A549 (cell line): ENCODE measurements at regions of chr14 and their contacts with region 1.

Region 1: DNA sequence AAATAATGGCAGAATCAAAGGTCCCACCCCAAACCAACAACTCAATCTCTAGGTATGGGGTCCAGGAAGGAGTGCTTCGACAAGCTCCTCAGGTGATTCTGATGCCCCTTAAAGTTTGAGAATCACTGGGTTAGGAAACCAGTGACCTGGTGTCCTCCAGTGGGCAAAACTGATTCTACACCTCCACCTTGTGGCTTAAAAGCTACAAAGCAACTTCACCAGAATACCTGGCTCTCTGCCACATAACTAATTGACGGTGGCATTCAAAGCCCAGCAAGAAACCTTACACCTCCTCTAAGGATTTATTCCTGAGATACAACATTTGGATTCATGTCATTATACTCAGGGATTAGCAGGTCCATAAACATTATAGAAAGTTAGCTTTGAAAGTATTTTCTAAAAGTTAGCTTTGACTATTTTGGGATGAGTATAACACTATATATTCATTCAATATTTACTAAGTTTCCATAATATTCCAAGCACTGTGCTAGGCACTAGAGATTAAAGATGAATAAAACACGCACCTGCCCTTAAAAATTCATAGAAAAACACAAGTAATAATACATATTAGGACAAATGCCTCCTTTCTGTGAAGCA is 45.4 kb downstream of the DCAF5 start:
- DNase-seq: peak; percentile 55 to 71
- ATAC-seq: peak; percentile 85 to 91; a peak in 5 of 6 replicates
- H3K4me3 ChIP-seq: no peak overlapping the region
- H3K27ac ChIP-seq: peak overlapping the region in 1 of 2 experiments; percentile 5; a peak in 1 of 6 replicates
- H3K4me1 ChIP-seq: no peaks in the 10 kb centered on the region; the same call in 2 of the 3 replicates
- CTCF ChIP-seq: peak; percentile 86
- EP300 ChIP-seq: no peak
- POLR2A ChIP-seq: no peak
- RAD21 ChIP-seq: peak; percentile 92 to 93

Region 2: GRCh38 chr14:68843471-68844209 is 263.9 kb before region 1 on chr14:
- CTCF ChIA-PET with region 1: interaction called, 17 read pairs
- POLR2A ChIA-PET with region 1: no interaction called
- DNase-seq: peak; percentile 69 to 76
- ATAC-seq: peak; percentile 91 to 96
- H3K4me3 ChIP-seq: no peak overlapping the region; the same call in 2 of the 3 replicates
- H3K27ac ChIP-seq: peak overlapping the region; percentile 35 to 83
- H3K4me1 ChIP-seq: 0 out of 3 replicates have a peak, but pooled peaks cover 4% of the 10 kb centered on the region
- CTCF ChIP-seq: peak; percentile 96
- EP300 ChIP-seq: no peak
- POLR2A ChIP-seq: no peak
- RAD21 ChIP-seq: peak; percentile 83 to 87

Region 3: GRCh38 chr14:68884031-68885030 is 223.2 kb before region 1 on chr14:
- CTCF ChIA-PET with region 1: interaction called, 23 read pairs
- POLR2A ChIA-PET with region 1: interaction called, 3 read pairs
- DNase-seq: peak; percentile 79 to 87
- ATAC-seq: peak; percentile 87 to 88
- H3K4me3 ChIP-seq: no peak overlapping the region; the same call in 2 of the 3 replicates
- H3K27ac ChIP-seq: peak overlapping the region; percentile 87 to 90
- H3K4me1 ChIP-seq: peaks cover 34% of the 10 kb centered on the region
- CTCF ChIP-seq: no peak
- EP300 ChIP-seq: peak in 1 of 2 experiments; percentile 32; a peak in 1 of 5 replicates
- POLR2A ChIP-seq: no peak
- RAD21 ChIP-seq: peak; percentile 1 to 11; a peak in 1 of 5 replicates

Region 4: DNA sequence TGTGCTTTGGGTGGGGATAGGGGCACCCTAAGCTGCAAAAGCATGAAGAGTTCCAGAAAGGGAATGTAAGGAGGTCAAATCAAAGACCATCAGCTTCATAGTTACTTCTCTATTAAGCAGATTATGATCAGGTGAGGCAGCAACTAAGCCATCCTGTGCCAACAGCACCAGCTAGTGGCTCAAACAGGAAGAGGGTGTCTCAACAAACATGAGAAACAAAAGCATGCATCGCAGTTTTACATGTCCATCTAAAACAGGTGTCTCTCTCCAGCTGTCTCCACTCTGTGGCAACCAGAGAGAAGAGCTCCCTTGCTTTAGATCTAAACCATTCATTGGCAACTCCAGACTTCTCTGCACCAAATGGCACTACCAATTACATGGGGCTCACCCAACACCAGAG is 181.3 kb before region 1 on chr14:
- CTCF ChIA-PET with region 1: interaction called, 33 read pairs
- POLR2A ChIA-PET with region 1: no interaction called
- DNase-seq: peak in 1 of 2 experiments; percentile 46
- ATAC-seq: no peak
- H3K4me3 ChIP-seq: no peak overlapping the region
- H3K27ac ChIP-seq: no peak overlapping the region
- H3K4me1 ChIP-seq: peaks cover 26% of the 10 kb centered on the region
- CTCF ChIP-seq: peak; percentile 23; the same call in 2 of the 3 replicates
- EP300 ChIP-seq: no peak
- POLR2A ChIP-seq: no peak
- RAD21 ChIP-seq: no peak

Region 5: DNA sequence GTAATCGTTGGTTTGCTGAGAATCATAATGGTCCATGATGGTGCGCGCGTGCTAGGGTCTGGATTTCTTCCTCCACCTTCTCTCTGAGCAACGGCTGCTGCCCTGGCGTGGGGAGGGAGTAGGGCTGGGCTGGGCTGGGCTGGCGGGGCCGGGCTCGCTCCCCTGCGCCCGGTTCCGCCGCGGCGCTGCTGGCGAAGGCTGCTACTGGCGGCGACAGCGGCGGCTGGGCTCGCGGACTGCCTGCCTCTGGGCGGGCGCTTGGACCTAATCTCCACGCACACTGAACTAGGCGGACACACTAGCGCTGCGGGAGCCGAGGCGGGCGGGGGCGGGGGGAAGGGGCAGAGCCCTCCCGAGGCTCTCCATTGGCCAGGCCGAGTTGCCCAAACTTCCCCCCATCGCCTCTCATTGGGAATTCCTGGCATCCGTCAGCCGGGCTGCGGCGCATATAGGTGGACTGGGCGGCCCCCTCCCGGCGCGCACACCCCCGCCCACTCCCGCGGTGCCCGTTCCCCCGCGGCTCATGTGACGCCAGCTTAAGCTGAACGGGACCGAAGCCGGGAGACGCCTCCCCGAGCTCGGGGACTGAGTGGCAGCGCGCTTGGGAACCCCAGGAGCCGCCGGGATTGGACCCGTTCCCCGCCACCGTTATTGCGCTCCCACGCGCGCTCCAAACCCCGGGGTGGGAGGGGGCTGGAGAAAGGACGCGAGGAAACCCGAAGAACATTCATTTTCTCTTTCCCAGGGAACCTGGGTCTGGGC is 128.3 kb before region 1 on chr14 and contains the start of gene ACTN1:
- CTCF ChIA-PET with region 1: interaction called, 14 read pairs
- POLR2A ChIA-PET with region 1: no interaction called
- DNase-seq: peak; percentile 96 to 97
- ATAC-seq: peak; percentile 84 to 91
- H3K4me3 ChIP-seq: peak within 1 kb of the TSS; percentile 98
- H3K27ac ChIP-seq: peak within 1 kb of the TSS; percentile 96 to 99
- H3K4me1 ChIP-seq: peaks cover 37% of the 10 kb centered on the region
- CTCF ChIP-seq: no peak
- EP300 ChIP-seq: no peak
- POLR2A ChIP-seq: peak; percentile 83
- RAD21 ChIP-seq: peak in 1 of 2 experiments; percentile 15; a peak in 2 of 5 replicates
- polyA plus RNA-seq, gene ACTN1: 207 and 208 TPM in 2 replicates

Region 6: DNA sequence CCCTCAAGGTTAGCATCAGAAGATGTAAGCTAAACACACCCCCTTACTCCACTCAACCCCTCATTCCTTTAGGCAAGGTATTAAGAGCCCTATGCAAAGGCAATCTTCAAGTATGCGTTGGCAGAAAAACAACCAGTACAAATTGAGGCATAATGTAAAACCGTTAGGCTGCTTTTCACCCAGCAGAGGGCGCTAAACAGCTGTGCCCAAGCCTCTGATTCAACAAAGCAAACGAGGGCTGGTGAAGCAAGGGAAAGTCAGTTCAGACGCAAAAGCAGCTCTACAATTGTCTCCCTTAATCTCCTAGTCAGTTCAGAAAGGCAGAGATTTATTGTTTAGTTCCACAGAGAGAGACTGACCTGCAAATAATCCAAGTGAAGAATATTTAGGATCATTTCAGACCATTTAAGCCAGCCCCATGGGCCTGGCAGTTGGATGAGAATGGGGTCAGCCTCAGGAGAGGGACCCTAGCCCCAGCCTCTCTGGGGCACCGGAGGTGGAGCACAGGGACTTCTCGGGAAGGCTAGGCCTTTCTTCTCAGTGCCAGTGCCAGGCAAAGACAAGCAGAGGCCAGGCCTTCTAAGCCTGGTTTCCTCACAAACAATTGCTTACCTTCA is 21.9 kb after region 1 on chr14:
- CTCF ChIA-PET with region 1: interaction called, 20 read pairs
- POLR2A ChIA-PET with region 1: no interaction called
- DNase-seq: peak; percentile 79 to 83
- ATAC-seq: peak; percentile 91 to 95
- H3K4me3 ChIP-seq: no peak overlapping the region
- H3K27ac ChIP-seq: peak overlapping the region; percentile 52 to 72; a peak in 4 of 6 replicates
- H3K4me1 ChIP-seq: peaks cover 34% of the 10 kb centered on the region
- CTCF ChIP-seq: peak; percentile 95
- EP300 ChIP-seq: no peak
- POLR2A ChIP-seq: no peak
- RAD21 ChIP-seq: peak; percentile 79 to 88